ENCODE measurements at regions of chr6 and their contacts with region 1.

Region 1: GRCh38 chr6:123965894-123966293 is 162.2 kb downstream of the NKAIN2 start:
- DNase-seq: peak; percentile 38
- H3K4me3 ChIP-seq: no peak overlapping the region
- H3K27ac ChIP-seq: no peak overlapping the region
- H3K4me1 ChIP-seq: no peaks in the 10 kb centered on the region
- H3K27me3 ChIP-seq: no peaks in the 10 kb centered on the region
- CTCF ChIP-seq: peak; percentile 76 to 82

Region 2: GRCh38 chr6:123393328-123393727 is 572.6 kb before region 1 on chr6:
- CTCF ChIA-PET with region 1: no interaction called
- dilution Hi-C with region 1: no loop called
- in situ Hi-C with region 1: no loop called
- intact Hi-C with region 1: loop called (anchors 5 kb)
- DNase-seq: no peak
- H3K4me3 ChIP-seq: no peak overlapping the region
- H3K27ac ChIP-seq: no peak overlapping the region
- H3K4me1 ChIP-seq: no peaks in the 10 kb centered on the region
- H3K27me3 ChIP-seq: no peaks in the 10 kb centered on the region
- CTCF ChIP-seq: peak; percentile 11 to 45

Region 3: DNA sequence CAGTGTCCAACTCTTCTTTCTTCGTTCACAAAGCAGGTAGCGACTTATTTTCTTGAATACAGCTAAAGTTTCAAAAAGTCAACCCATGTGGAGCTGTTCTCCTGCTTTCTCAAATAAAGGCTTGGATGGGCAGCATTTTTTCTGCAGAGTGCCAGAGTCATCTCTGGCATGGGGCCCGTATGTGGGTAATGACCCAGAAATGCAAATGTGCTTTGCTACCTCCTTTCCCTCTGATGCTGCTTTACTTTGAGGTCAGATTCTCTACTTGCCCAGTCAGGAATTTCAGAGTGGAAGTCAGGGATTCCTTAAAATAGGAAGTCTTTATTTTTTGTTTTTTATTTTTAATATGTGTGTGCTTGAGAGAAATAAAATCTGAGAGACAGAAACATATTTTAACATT is 157.3 kb before region 1 on chr6:
- CTCF ChIA-PET with region 1: no interaction called
- dilution Hi-C with region 1: no loop called
- in situ Hi-C with region 1: loop called (anchors 5 kb)
- intact Hi-C with region 1: no loop called
- DNase-seq: no peak
- H3K4me3 ChIP-seq: no peak overlapping the region
- H3K27ac ChIP-seq: no peak overlapping the region
- H3K4me1 ChIP-seq: peaks cover 6% of the 10 kb centered on the region
- H3K27me3 ChIP-seq: peaks cover 16% of the 10 kb centered on the region
- CTCF ChIP-seq: no peak

Region 4: GRCh38 chr6:124066946-124067552 is 101.2 kb after region 1 on chr6:
- CTCF ChIA-PET with region 1: no interaction called
- dilution Hi-C with region 1: no loop called
- in situ Hi-C with region 1: no loop called
- intact Hi-C with region 1: no loop called
- DNase-seq: no peak
- H3K4me3 ChIP-seq: no peak overlapping the region
- H3K27ac ChIP-seq: no peak overlapping the region
- H3K4me1 ChIP-seq: no peaks in the 10 kb centered on the region
- H3K27me3 ChIP-seq: no peaks in the 10 kb centered on the region
- CTCF ChIP-seq: no peak

Region 5: DNA sequence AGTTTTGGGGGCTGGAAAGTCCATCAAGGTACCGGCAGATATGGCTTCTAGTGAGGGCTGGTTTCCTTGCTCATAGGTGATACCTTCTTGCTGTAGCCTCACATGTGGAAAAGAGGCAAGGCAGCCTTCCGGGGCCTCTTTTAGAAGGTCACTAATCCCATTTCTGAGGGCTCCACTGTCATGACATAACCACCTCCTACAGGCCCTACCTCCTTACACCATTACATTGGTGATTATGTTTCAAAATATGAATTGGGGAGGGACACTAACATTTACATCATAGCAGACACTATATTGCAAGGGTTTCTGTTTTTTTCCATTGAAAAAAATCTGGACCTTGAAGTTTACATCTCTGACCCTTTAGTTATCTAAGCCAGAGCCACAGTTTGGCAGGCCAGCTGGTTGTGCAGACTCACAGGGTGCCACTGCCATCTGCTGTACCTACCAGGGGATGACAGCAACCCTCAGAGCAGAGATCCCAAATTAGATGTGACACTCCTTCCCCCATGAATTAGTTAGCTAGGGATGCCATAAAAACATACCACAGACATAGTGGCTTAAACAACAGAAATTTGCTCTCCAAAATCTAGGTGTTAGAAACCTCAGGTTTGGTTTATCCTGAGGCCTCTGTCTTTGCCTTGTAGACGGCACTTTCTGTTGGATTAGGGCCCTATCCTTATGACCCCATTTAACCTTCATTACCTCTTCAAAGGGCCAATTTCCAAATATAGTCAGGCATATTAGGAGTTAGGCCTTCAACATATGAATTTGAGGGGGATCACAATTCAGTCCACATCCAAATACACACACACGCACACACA is 830.0 kb after region 1 on chr6:
- CTCF ChIA-PET with region 1: no interaction called
- dilution Hi-C with region 1: no loop called
- in situ Hi-C with region 1: no loop called
- intact Hi-C with region 1: loop called (anchors 1 kb)
- DNase-seq: no peak
- H3K4me3 ChIP-seq: no peak overlapping the region
- H3K27ac ChIP-seq: no peak overlapping the region
- H3K4me1 ChIP-seq: peaks cover 7% of the 10 kb centered on the region
- H3K27me3 ChIP-seq: peaks cover 2% of the 10 kb centered on the region
- CTCF ChIP-seq: peak; percentile 58 to 75